Common myeloid progenitor, CD34-positive (primary cell): ENCODE measurements at regions of chr3 and their contacts with region 1.

Region 1: GRCh38 chr3:193465992-193466608 is 87.5 kb upstream of the ATP13A5 start:
- DNase-seq: peak in 2 of 3 donors; percentile 4 to 27
- H3K4me3 ChIP-seq: no peak overlapping the region
- H3K27ac ChIP-seq: no peak overlapping the region
- H3K4me1 ChIP-seq: no peaks in the 10 kb centered on the region
- H3K27me3 ChIP-seq: no peaks in the 10 kb centered on the region

Region 2: GRCh38 chr3:193572426-193572908 is 106.4 kb after region 1 on chr3:
- CTCF ChIA-PET with region 1: interaction called, 23 read pairs
- POLR2A ChIA-PET with region 1: no interaction called
- DNase-seq: peak; percentile 70 to 81 (median 77)
- H3K4me3 ChIP-seq: no peak overlapping the region
- H3K27ac ChIP-seq: no peak overlapping the region
- H3K4me1 ChIP-seq: peaks cover 0 to 5% (median 2%) of the 10 kb centered on the region in 4 experiments
- H3K27me3 ChIP-seq: peaks cover 0 to 3% (median 0%) of the 10 kb centered on the region in 5 experiments